B cell (primary cell): ENCODE measurements at regions of chr14 and their contacts with region 1.

Region 1: DNA sequence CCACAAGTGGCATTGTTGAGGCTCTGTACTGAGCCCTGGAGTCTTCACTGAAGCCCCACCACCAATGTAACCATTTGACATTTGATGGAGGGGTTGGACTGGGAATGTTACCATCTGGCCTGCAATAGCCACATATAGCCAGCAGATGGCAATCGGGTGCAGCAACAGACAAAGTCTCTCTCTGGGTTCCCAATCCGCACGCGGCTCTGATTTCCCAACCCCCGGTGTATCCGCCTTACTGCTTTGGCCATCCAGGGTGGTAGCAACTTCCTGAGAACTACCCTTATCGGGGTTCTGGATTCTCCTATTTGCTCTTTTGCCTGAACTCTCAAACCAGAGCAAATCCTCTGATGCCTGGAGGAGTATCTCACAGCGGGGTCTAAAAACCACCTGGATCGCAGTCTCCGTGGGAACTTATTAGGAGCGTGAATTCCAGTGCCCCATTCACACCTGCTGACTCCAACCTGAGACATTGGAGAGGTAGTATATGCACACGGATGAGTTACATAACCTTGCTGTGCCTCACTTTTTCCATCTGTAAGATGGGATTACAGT is 14.2 kb downstream of the VRTN start:
- DNase-seq: peak; percentile 79
- ATAC-seq: peak; percentile 88
- H3K4me3 ChIP-seq: no peak overlapping the region
- H3K4me3 Mint-ChIP-seq: no peak overlapping the region
- H3K27ac ChIP-seq: no peak overlapping the region
- H3K27ac Mint-ChIP-seq: no peak overlapping the region
- H3K4me1 ChIP-seq: peaks cover 4 to 5% of the 10 kb centered on the region in 2 donors
- H3K4me1 Mint-ChIP-seq: no peaks in the 10 kb centered on the region
- H3K27me3 ChIP-seq: peaks cover 0 to 3% (median 0%) of the 10 kb centered on the region in 4 experiments
- H3K27me3 Mint-ChIP-seq: peaks cover 6% of the 10 kb centered on the region
- CTCF ChIP-seq: peak; percentile 99

Region 2: GRCh38 chr14:73116079-73116665 is 1246.3 kb before region 1 on chr14:
- CTCF ChIA-PET with region 1: no interaction called
- POLR2A ChIA-PET with region 1: no interaction called
- intact Hi-C with region 1: no loop called
- DNase-seq: no peak
- ATAC-seq: no peak
- H3K4me3 ChIP-seq: no peak overlapping the region
- H3K4me3 Mint-ChIP-seq: no peak overlapping the region
- H3K27ac ChIP-seq: no peak overlapping the region
- H3K27ac Mint-ChIP-seq: no peak overlapping the region
- H3K4me1 ChIP-seq: no peaks in the 10 kb centered on the region
- H3K4me1 Mint-ChIP-seq: no peaks in the 10 kb centered on the region
- H3K27me3 ChIP-seq: no peaks in the 10 kb centered on the region
- H3K27me3 Mint-ChIP-seq: no peaks in the 10 kb centered on the region
- CTCF ChIP-seq: no peak

Region 3: GRCh38 chr14:74478996-74479635 is 116.7 kb after region 1 on chr14:
- CTCF ChIA-PET with region 1: interaction called, 48 read pairs
- POLR2A ChIA-PET with region 1: no interaction called
- intact Hi-C with region 1: loop called (anchors 1 kb)
- DNase-seq: peak; percentile 36
- ATAC-seq: no peak
- H3K4me3 ChIP-seq: no peak overlapping the region
- H3K4me3 Mint-ChIP-seq: no peak overlapping the region
- H3K27ac ChIP-seq: no peak overlapping the region
- H3K27ac Mint-ChIP-seq: no peak overlapping the region
- H3K4me1 ChIP-seq: no peaks in the 10 kb centered on the region
- H3K4me1 Mint-ChIP-seq: no peaks in the 10 kb centered on the region
- H3K27me3 ChIP-seq: no peaks in the 10 kb centered on the region
- H3K27me3 Mint-ChIP-seq: no peaks in the 10 kb centered on the region
- CTCF ChIP-seq: peak; percentile 68

Region 4: DNA sequence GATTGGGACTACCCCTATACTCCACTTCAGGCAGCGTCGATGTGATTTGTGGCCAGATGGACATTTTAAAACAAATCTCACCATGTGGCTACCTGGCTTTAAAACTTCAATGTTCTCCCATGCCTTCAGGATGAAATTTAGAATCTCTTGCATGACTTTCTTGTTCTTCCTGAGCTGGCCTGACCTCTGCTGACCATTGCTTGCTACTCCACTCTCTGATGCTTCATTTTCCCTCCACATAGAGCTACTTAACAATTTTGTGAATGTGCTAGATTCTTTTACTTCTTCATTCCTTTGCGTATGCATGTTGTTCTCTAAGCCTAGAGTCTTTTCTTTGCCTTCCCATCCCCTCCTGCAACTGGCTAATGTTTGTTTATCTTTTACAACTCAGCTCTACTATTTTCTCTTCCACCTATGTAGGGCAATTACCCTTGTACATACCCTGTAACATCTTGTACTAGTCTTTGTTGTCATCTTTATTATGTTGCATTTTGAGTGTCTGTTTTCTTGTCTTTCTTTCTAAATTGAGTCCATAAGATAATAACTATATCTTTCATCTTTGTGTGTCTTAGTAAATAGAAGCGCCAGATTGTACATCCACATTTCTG is 441.9 kb after region 1 on chr14:
- CTCF ChIA-PET with region 1: no interaction called
- POLR2A ChIA-PET with region 1: no interaction called
- intact Hi-C with region 1: no loop called
- DNase-seq: peak; percentile 33
- ATAC-seq: no peak
- H3K4me3 ChIP-seq: no peak overlapping the region
- H3K4me3 Mint-ChIP-seq: no peak overlapping the region
- H3K27ac ChIP-seq: no peak overlapping the region
- H3K27ac Mint-ChIP-seq: no peak overlapping the region
- H3K4me1 ChIP-seq: no peaks in the 10 kb centered on the region
- H3K4me1 Mint-ChIP-seq: no peaks in the 10 kb centered on the region
- H3K27me3 ChIP-seq: no peaks in the 10 kb centered on the region
- H3K27me3 Mint-ChIP-seq: no peaks in the 10 kb centered on the region
- CTCF ChIP-seq: peak; percentile 58